Activated CD4-positive, alpha-beta T cell treated with anti-CD3 and anti-CD28 coated beads for 36 hours (primary cell): ENCODE measurements at regions of chr15 and their contacts with region 1.

Region 1: DNA sequence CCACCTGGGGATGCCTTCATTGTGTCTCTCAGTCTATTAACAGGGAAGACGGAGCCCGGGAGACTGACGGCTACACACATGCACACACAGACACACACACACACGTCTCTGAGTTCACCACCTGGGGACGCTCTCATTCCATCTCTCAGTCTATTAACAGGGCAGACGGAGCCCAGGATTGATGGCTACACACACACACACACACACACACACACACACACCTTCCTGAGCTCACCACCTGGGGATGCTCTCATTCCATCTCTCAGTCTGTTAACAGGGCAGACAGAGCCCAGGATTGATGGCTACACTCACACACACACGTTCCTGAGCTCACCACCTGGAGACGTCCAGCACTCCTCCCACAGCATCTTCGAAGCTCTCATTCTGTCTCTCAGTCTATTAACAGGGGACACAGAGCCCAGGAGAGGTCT is 143.9 kb downstream of the OR4M2 start:
- DNase-seq: peak; percentile 50
- ATAC-seq: no peak
- H3K4me3 Mint-ChIP-seq: no peak overlapping the region
- H3K27ac Mint-ChIP-seq: peak overlapping the region; percentile 5
- H3K4me1 Mint-ChIP-seq: peaks cover 31% of the 10 kb centered on the region
- H3K27me3 Mint-ChIP-seq: peaks cover 3% of the 10 kb centered on the region

Region 2: DNA sequence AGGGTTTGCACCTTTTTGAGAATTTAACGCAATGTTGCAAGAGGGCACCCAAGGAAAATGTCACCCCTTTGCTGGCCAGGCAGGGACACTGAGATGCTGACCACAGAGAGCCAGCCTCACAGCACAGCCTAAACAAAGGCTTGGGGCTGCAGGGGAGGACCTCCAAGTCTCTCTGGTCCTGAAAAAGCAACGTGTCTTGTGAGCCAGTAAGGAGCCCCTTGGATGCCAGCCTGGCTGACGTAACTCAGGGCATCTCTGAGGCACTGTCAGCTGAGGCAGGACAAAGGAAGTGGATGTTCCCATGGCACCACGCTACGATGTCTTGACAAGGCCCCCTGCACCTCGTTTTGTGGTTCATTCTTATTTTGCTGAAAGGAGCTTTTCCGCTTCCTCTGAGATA is 16.7 kb after region 1 on chr15:
- CTCF ChIA-PET with region 1: interaction called, 14 read pairs
- POLR2A ChIA-PET with region 1: no interaction called
- intact Hi-C with region 1: loop called in 1 of 2 experiments (anchors 1 kb)
- DNase-seq: no peak
- ATAC-seq: no peak
- H3K4me3 Mint-ChIP-seq: no peak overlapping the region
- H3K27ac Mint-ChIP-seq: no peak overlapping the region
- H3K4me1 Mint-ChIP-seq: peaks cover 9% of the 10 kb centered on the region
- H3K27me3 Mint-ChIP-seq: peaks cover 10% of the 10 kb centered on the region

Region 3: DNA sequence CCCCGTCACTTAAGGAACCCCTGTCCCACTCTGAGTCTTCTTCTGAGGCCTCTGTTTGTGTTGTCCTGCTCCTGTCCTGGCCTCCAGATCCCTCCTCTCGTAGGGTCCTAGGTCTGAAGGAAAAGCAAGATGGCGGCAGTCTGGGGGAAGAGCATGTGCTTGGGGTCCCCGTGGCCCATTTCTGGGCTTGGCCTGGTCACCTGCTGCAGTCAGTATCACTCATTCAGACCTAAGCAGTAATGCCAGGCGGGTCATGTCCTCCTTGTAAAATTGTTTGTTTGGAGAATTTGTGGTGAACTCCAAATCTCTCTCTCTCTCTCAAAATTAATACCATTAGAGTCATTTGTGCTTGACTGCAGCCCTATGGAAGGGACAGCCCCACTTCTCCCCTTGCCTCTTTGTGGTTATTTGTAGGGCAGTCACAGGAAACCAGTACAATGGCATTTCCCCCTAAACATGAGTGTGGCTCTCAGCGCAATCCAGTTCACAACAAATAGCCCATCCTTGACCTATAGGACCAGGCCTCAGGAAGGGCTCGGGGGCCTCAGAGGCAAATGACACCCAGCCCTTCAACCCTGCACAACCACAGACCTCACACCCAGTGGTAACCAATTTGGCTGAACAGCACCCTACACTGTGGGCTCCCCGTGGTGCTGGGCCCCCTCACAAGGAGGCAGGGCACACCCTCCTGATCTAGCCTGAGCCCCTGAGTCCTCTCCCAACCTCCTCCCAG is 29.6 kb after region 1 on chr15:
- CTCF ChIA-PET with region 1: interaction called, 3 read pairs
- POLR2A ChIA-PET with region 1: no interaction called
- intact Hi-C with region 1: loop called in 1 of 2 experiments (anchors 1 kb)
- DNase-seq: peak; percentile 47
- ATAC-seq: peak; percentile 68
- H3K4me3 Mint-ChIP-seq: no peak overlapping the region
- H3K27ac Mint-ChIP-seq: peak overlapping the region; percentile 8
- H3K4me1 Mint-ChIP-seq: peaks cover 17% of the 10 kb centered on the region
- H3K27me3 Mint-ChIP-seq: peaks cover 24% of the 10 kb centered on the region

Region 4: DNA sequence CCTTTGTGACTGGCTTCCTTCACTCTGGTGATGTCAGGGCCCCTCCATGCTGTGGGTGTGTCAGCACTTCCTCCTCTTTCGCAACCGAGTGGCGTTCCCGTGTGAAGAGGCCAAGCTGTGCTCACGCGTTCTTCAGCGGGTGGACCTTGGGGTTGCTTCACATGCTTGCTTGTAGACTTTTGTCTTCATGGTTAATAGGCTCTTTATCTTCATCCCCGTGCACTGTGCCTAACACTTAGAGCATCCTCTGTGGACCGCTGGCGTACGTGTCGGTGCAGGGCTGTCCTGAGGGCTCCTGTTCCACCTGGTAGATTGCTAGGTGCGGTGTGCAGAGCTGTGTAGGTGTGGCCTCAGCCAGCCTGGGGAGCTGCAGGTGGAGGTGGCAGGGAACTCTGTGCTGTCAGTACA is 38.4 kb after region 1 on chr15:
- CTCF ChIA-PET with region 1: interaction called, 18 read pairs
- POLR2A ChIA-PET with region 1: interaction called, 3 read pairs
- intact Hi-C with region 1: no loop called
- DNase-seq: peak; percentile 67
- ATAC-seq: no peak
- H3K4me3 Mint-ChIP-seq: no peak overlapping the region
- H3K27ac Mint-ChIP-seq: no peak overlapping the region
- H3K4me1 Mint-ChIP-seq: peaks cover 23% of the 10 kb centered on the region
- H3K27me3 Mint-ChIP-seq: peaks cover 5% of the 10 kb centered on the region

Region 5: GRCh38 chr15:22811640-22812039 is 587.4 kb after region 1 on chr15:
- CTCF ChIA-PET with region 1: no interaction called
- POLR2A ChIA-PET with region 1: no interaction called
- intact Hi-C with region 1: no loop called
- DNase-seq: peak; percentile 18
- ATAC-seq: no peak
- H3K4me3 Mint-ChIP-seq: no peak overlapping the region
- H3K27ac Mint-ChIP-seq: no peak overlapping the region
- H3K4me1 Mint-ChIP-seq: peaks cover 8% of the 10 kb centered on the region
- H3K27me3 Mint-ChIP-seq: no peaks in the 10 kb centered on the region

Region 6: GRCh38 chr15:22845289-22845900 is 621.1 kb after region 1 on chr15:
- CTCF ChIA-PET with region 1: no interaction called
- POLR2A ChIA-PET with region 1: no interaction called
- intact Hi-C with region 1: no loop called
- DNase-seq: no peak
- ATAC-seq: no peak
- H3K4me3 Mint-ChIP-seq: no peak overlapping the region
- H3K27ac Mint-ChIP-seq: peak overlapping the region; percentile 42
- H3K4me1 Mint-ChIP-seq: peaks cover 55% of the 10 kb centered on the region
- H3K27me3 Mint-ChIP-seq: no peaks in the 10 kb centered on the region